Esophagus squamous epithelium (tissue), 5 donors: ENCODE measurements at regions of chr3 and their contacts with region 1.

Region 1: DNA sequence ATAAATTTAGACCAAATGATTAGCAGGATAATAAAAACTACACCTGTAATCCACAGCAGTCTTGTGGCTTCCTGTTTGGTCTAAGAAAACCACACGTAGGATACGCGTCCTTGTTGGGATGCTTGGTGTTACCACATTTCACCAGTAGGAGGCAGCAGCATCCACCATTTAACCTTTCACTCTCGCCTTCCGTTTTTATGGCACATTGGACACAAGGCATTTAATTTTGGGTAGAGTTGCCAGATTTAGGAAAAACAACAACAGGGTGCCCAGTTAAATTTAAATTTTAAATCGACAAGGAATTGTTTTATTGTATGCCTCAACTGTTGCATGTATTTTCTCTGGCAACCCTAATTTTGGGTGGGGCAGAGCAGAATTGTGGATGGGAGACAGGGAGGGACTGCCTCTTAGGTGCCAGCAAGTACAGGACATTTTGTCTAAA is 6.3 kb downstream of the LRRC31 start:
- DNase-seq: no peak
- H3K4me3 ChIP-seq: no peak overlapping the region
- H3K27ac ChIP-seq: no peak overlapping the region
- H3K4me1 ChIP-seq: peaks cover 0 to 7% (median 0%) of the 10 kb centered on the region in 3 donors
- H3K27me3 ChIP-seq: peaks cover 0 to 7% (median 0%) of the 10 kb centered on the region in 4 donors
- CTCF ChIP-seq: peak; percentile 77 to 87 (median 83)
- POLR2A ChIP-seq: no peak

Region 2: DNA sequence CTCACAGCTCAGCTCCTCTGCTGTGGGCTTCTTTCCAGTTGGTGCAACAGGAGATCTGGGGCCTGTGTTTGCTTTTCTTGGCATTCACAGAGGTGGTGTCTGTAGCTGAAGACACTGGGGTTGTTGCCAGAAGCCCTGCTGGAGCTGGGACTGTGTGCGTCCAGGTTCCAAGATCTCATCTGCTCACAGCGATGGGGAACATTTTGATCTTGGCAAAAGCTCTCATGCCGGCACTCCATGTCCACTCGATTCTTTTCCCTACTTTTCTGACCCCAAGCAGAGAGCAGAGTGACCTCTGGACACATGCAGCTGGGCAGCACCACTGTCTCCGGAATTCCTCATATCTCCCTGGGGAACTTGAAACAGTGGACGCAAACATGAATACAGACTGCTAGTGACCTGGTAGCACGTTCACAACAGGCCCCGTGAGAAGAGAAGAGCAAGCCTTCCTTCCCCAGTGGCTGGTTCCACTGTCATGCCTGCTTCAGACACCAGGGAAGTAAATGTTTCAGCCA is 163.9 kb before region 1 on chr3:
- intact Hi-C with region 1: no loop called
- DNase-seq: peak; percentile 2
- H3K4me3 ChIP-seq: no peak overlapping the region
- H3K27ac ChIP-seq: peak overlapping the region; percentile 50 to 68 (median 64)
- H3K4me1 ChIP-seq: peaks cover 0 to 16% (median 0%) of the 10 kb centered on the region in 3 donors
- H3K27me3 ChIP-seq: no peaks in the 10 kb centered on the region
- CTCF ChIP-seq: no peak
- POLR2A ChIP-seq: no peak

Region 3: GRCh38 chr3:170021083-170021482 is 157.6 kb after region 1 on chr3:
- intact Hi-C with region 1: loop called (anchors 10 kb)
- DNase-seq: no peak
- H3K4me3 ChIP-seq: no peak overlapping the region
- H3K27ac ChIP-seq: no peak overlapping the region
- H3K4me1 ChIP-seq: no peaks in the 10 kb centered on the region
- H3K27me3 ChIP-seq: no peaks in the 10 kb centered on the region
- CTCF ChIP-seq: no peak
- POLR2A ChIP-seq: no peak